Right cardiac atrium (tissue), 5 donors: ENCODE measurements at regions of chr21 and their contacts with region 1.

Region 1: DNA sequence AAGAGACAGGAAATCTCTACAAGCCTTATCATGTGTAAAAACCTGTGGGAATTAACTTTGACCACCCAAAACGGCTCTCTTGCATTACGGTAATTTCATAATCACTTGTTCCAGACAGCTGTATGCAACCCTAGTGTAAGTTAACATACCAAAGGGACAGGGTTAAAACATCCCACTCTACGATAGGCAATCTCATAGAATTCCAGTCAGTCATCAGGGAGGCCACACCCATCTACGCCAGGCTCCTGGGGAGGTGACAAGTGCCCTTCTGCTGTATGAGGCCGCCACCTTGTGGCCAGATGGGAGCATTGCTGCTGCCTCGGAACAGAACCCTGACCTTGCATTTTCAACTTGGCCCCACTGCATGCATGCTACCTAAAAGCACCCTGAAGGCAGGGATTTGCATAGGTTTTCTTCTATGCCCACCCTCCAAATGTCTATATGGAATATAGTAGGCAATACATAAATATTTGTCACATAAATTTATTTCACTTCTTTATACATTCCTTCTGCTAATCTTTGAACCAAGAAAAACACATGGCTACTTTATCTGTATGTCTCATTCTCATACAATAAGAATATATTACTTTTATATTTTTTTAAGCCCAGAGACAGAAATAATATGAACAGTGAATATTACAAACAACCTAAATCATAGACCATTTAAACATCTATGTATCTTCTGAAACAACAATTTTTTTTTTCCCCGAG is 12.6 kb downstream of the HSF2BP start:
- DNase-seq: peak; percentile 92 to 95 (median 95)
- ATAC-seq: peak; percentile 96 to 98
- H3K4me3 ChIP-seq: no peak overlapping the region
- H3K27ac ChIP-seq: no peak overlapping the region
- H3K4me1 ChIP-seq: no peaks in the 10 kb centered on the region
- H3K27me3 ChIP-seq: no peaks in the 10 kb centered on the region

Region 2: DNA sequence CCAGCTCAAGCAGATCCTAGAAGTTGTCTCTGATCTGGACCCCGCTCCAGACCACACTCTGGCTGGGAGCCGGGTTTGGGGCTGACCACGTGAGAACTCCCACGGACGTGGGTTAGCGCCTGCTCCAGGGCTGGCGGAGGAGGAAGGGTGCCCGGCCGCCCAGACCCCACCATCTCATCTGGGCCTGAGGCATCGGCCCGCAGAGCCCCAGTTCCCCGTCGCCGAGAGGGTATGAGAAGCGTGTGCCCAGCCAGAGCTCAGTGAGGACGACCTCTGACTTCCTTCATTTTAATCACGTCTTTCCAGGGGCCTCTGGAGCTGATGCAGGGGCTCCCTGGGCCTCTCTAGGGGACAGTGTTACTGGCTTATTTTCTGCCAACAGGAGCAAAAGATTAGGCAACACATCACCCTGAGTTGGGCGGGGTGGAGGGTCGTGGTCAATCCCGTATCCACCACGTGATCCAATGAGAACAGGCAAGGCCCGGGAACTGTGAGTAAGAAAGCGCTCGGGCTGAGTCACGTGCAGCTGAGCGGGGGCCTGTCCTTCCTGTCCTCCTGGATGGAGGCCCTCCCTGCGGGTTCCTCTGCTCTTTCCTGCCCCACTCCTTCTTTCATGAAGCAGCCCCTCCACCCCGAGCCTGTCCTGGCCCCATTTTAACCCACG is 300.8 kb before region 1 on chr21:
- intact Hi-C with region 1: loop called in 2 of 4 experiments (anchors 10 kb)
- DNase-seq: peak; percentile 29 to 48 (median 33)
- ATAC-seq: no peak
- H3K4me3 ChIP-seq: no peak overlapping the region
- H3K27ac ChIP-seq: no peak overlapping the region
- H3K4me1 ChIP-seq: peaks cover 2% of the 10 kb centered on the region
- H3K27me3 ChIP-seq: no peaks in the 10 kb centered on the region

Region 3: DNA sequence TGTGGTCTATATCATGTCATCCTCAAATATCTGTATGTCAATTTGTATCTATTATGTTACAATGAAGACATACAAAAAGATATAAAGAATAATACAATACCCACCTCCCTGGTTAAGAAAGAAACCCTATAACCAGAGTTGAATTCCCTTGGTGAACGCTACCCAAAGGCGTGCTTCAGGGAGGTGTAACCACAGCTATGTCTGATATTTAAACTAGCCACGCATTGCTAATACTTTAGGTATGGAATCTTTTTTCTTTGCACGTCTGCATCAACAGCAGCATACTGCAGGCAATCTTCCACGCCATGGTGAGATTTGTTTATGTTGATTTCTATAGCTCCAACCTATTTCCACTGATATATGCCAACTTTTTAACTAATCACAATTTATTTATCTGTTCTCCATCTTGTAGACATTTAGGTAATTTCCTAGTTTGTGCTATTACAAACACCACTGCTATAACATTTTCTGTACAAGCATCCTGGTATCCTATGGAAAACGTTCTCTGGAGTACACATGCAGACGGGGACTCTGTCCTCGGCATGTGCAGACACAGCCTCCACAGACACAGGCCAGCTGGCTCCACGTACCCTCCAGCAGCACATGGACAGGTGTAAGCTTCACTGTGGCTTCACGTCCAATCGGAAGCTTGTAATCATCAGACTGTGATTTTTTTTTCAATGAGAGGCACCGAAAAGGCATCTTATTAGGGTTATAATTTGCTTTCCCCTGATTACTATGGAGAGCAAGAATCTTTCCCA is 45.9 kb before region 1 on chr21:
- intact Hi-C with region 1: no loop called
- DNase-seq: no peak
- ATAC-seq: no peak
- H3K4me3 ChIP-seq: no peak overlapping the region
- H3K27ac ChIP-seq: no peak overlapping the region
- H3K4me1 ChIP-seq: no peaks in the 10 kb centered on the region
- H3K27me3 ChIP-seq: no peaks in the 10 kb centered on the region